B cell (primary cell): ENCODE measurements at regions of chr12 and their contacts with region 1.

Region 1: DNA sequence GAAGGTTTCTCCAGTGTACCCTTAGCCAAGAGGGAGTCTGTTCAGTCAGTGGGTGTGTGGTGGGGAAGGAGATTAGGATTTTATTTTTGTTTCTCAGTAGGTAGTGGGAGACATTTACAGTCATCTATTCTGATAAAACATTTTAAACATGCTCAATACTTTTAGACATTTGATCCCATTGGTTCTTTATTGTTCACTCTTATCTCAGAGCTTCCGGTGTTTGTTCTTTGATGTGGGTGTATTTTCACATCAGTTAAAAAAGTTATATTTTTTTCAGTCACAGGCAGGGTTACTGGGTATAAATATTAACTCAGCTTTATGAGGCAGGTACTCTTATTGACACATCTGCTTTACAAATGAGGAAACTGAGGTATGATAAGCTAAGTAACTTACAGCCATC is 43.3 kb upstream of the LRRK2 start:
- DNase-seq: no peak
- ATAC-seq: no peak
- H3K4me3 ChIP-seq: no peak overlapping the region
- H3K4me3 Mint-ChIP-seq: no peak overlapping the region
- H3K27ac ChIP-seq: no peak overlapping the region
- H3K27ac Mint-ChIP-seq: no peak overlapping the region
- H3K4me1 ChIP-seq: no peaks in the 10 kb centered on the region
- H3K4me1 Mint-ChIP-seq: no peaks in the 10 kb centered on the region
- H3K27me3 ChIP-seq: no peaks in the 10 kb centered on the region
- H3K27me3 Mint-ChIP-seq: no peaks in the 10 kb centered on the region
- CTCF ChIP-seq: no peak

Region 2: DNA sequence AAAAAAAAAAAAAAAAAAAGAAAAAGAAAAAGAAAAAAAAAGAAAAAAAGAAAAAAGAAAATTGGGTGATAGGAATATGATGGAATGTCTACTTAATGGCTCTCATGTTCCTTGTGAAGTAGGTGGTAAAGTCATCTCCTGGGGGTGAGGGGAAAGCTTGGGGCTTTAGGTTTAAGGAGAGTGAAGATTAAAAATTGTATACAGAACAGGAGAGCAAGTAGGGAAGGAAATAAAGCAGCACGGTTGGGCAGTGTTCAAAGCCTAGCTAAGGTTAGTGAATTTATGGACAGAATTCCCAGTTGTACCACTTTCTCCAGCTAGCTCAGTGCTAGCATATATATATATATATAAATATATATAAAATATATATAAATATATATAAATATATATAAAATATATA is 35.6 kb before region 1 on chr12:
- CTCF ChIA-PET with region 1: no interaction called
- POLR2A ChIA-PET with region 1: interaction called, 15 read pairs
- intact Hi-C with region 1: no loop called
- DNase-seq: no peak
- ATAC-seq: no peak
- H3K4me3 ChIP-seq: no peak overlapping the region
- H3K4me3 Mint-ChIP-seq: no peak overlapping the region
- H3K27ac ChIP-seq: no peak overlapping the region
- H3K27ac Mint-ChIP-seq: no peak overlapping the region
- H3K4me1 ChIP-seq: no peaks in the 10 kb centered on the region
- H3K4me1 Mint-ChIP-seq: no peaks in the 10 kb centered on the region
- H3K27me3 ChIP-seq: no peaks in the 10 kb centered on the region
- H3K27me3 Mint-ChIP-seq: no peaks in the 10 kb centered on the region
- CTCF ChIP-seq: no peak

Region 3: GRCh38 chr12:40393031-40393430 is 211.5 kb after region 1 on chr12:
- CTCF ChIA-PET with region 1: no interaction called
- POLR2A ChIA-PET with region 1: no interaction called
- intact Hi-C with region 1: no loop called
- DNase-seq: no peak
- ATAC-seq: no peak
- H3K4me3 ChIP-seq: no peak overlapping the region
- H3K4me3 Mint-ChIP-seq: no peak overlapping the region
- H3K27ac ChIP-seq: no peak overlapping the region
- H3K27ac Mint-ChIP-seq: no peak overlapping the region
- H3K4me1 ChIP-seq: no peaks in the 10 kb centered on the region
- H3K4me1 Mint-ChIP-seq: no peaks in the 10 kb centered on the region
- H3K27me3 ChIP-seq: no peaks in the 10 kb centered on the region
- H3K27me3 Mint-ChIP-seq: peaks cover 13% of the 10 kb centered on the region
- CTCF ChIP-seq: no peak